Panc1 (cell line): ENCODE measurements at regions of chr17 and their contacts with region 1.

Region 1: DNA sequence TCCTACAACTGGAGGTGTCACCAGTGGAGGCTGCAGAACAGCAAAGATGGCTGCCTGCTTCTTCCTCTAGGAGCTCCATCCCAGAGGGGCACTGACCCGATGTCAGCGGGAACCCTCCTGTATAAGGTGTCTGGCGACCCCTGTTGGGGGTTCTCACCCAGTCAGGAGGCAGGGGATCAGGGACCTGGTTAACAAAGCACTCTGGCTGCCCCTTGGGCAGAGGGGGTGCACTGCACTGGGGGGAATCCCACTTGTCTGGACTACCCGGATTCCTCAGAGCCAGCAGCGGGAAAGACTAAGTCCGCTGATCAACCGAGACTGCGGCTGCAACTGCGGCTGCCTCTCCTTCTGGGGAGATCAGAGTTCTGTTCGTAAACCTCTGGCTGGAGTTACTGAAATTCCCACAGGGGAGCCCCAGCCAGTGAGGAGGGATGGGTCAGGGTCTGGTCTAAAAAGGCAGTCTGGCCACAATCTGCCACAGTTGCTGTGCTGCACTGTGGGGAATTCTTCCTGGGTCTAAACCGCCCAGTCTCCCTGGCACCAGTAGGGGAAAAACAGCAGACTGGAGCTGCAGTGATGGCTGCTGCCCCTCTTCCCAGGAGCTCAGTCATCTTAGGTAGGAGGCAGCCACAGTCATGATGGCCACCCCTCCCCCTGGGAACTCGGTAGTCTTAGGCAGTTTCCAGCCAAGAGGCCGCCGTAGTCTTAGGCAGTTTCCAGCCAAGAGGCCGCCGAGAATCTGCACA is 213.4 kb downstream of the CYB561 start:
- DNase-seq: no peak
- ATAC-seq: no peak
- H3K4me3 ChIP-seq: no peak overlapping the region
- H3K27ac ChIP-seq: no peak overlapping the region
- H3K4me1 ChIP-seq: no peaks in the 10 kb centered on the region
- H3K27me3 ChIP-seq: no peaks in the 10 kb centered on the region
- CTCF ChIP-seq: no peak

Region 2: DNA sequence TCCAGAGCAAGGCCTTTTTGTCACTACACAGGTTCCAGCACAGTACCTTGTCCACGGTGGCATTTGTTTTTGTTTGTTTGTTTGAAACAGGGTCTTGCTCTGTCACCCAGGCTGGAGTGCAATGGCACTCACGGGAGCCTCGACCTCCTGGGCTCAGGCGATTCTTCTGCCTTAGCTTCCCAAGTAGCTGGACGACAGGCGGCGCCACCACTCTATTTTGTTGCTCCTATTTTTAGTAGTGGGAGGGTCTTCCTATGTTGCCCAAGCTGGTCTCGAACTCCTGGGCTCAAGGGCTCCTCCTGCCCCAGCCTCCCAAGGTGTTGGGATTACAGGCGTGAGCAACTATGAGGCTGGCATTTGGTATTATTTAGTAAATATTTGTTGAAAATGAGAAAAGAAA is 594.9 kb before region 1 on chr17:
- CTCF ChIA-PET with region 1: no interaction called
- POLR2A ChIA-PET with region 1: interaction called, 17 read pairs
- in situ Hi-C with region 1: no loop called
- intact Hi-C with region 1: no loop called
- DNase-seq: no peak
- ATAC-seq: no peak
- H3K4me3 ChIP-seq: no peak overlapping the region
- H3K27ac ChIP-seq: no peak overlapping the region
- H3K4me1 ChIP-seq: peaks cover 5% of the 10 kb centered on the region; the same call in 1 of the 2 replicates
- H3K27me3 ChIP-seq: no peaks in the 10 kb centered on the region
- CTCF ChIP-seq: no peak

Region 3: DNA sequence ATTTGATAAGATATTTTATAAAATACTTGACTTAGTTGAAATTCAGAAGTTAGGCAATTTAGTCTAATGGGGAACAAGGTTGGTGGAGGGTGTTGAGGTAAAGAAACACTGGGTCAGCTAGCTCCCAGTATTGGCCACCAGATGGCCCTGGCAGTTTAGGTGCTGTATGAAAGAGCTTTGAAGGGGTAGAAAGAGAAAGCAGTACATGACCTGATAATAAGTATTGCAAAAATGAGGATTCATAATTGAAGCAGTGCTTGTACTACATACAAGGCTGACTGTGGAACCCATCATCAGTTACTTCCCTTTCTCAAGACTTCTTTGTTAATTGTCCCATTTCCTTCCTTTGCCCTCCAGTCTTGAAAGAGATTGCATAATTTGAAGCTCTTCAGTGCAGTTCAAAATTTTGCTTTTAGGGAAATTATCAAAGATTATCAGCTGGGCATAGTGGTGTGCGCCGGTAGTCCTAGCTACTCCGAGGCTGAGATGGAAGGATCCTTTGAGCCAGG is 237.3 kb before region 1 on chr17:
- CTCF ChIA-PET with region 1: no interaction called
- POLR2A ChIA-PET with region 1: interaction called, 13 read pairs
- in situ Hi-C with region 1: no loop called
- intact Hi-C with region 1: no loop called
- DNase-seq: no peak
- ATAC-seq: peak; percentile 90
- H3K4me3 ChIP-seq: no peak overlapping the region
- H3K27ac ChIP-seq: no peak overlapping the region
- H3K4me1 ChIP-seq: peaks cover 3% of the 10 kb centered on the region; the same call in 1 of the 2 replicates
- H3K27me3 ChIP-seq: no peaks in the 10 kb centered on the region
- CTCF ChIP-seq: peak; percentile 82